ENCODE measurements at regions of chr1 and their contacts with region 1.

Region 1: GRCh38 chr1:227542143-227543120 is 20.9 kb upstream of the ZNF678 start:
- DNase-seq: no peak
- ATAC-seq: peak; percentile 97
- H3K4me3 ChIP-seq: peak overlapping the region; percentile 60 to 68
- H3K27ac ChIP-seq: peak overlapping the region; percentile 89
- H3K4me1 ChIP-seq: peaks cover 4% of the 10 kb centered on the region
- H3K27me3 ChIP-seq: no peaks in the 10 kb centered on the region
- CTCF ChIP-seq: peak; percentile 99

Region 2: GRCh38 chr1:227489572-227489971 is 52.9 kb before region 1 on chr1:
- CTCF ChIA-PET with region 1: no interaction called
- POLR2A ChIA-PET with region 1: no interaction called
- in situ Hi-C with region 1: no loop called
- intact Hi-C with region 1: loop called (anchors 10 kb)
- DNase-seq: no peak
- ATAC-seq: no peak
- H3K4me3 ChIP-seq: no peak overlapping the region
- H3K27ac ChIP-seq: no peak overlapping the region
- H3K4me1 ChIP-seq: no peaks in the 10 kb centered on the region
- H3K27me3 ChIP-seq: no peaks in the 10 kb centered on the region
- CTCF ChIP-seq: no peak

Region 3: DNA sequence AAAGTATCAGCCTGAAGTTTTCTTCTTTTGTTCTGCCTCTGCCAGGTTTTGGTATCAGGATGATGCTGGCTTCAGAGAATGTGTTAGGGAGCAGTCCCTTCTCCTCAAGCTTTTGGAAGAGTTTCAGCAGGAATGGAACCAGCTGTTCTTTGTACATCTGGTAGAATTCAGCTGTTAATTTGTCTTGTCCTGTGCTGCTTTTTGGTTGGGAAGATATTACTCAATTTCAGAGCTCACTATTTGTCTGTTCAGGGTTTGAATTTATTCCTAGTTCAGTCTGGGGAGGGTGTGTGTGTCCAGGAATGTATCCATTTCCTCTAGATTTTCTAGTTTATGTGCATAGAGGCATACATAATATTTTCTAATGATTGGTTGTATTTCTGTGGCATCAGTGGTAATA is 33.8 kb after region 1 on chr1:
- CTCF ChIA-PET with region 1: no interaction called
- POLR2A ChIA-PET with region 1: interaction called, 16 read pairs
- in situ Hi-C with region 1: no loop called
- intact Hi-C with region 1: no loop called
- DNase-seq: no peak
- ATAC-seq: no peak
- H3K4me3 ChIP-seq: no peak overlapping the region
- H3K27ac ChIP-seq: no peak overlapping the region
- H3K4me1 ChIP-seq: no peaks in the 10 kb centered on the region
- H3K27me3 ChIP-seq: no peaks in the 10 kb centered on the region
- CTCF ChIP-seq: no peak

Measured in Panc1 (cell line).